Activated CD4-positive, alpha-beta memory T cell treated with anti-CD3 and anti-CD28 coated beads for 36 hours (primary cell): ENCODE measurements at regions of chr19 and their contacts with region 1.

Region 1: GRCh38 chr19:55452749-55453346 is 8.6 kb downstream of the ISOC2 start:
- DNase-seq: peak; percentile 52
- H3K4me3 Mint-ChIP-seq: no peak overlapping the region
- H3K27ac Mint-ChIP-seq: no peak overlapping the region
- H3K4me1 Mint-ChIP-seq: peaks cover 7% of the 10 kb centered on the region
- H3K27me3 Mint-ChIP-seq: peaks cover 22% of the 10 kb centered on the region

Region 2: DNA sequence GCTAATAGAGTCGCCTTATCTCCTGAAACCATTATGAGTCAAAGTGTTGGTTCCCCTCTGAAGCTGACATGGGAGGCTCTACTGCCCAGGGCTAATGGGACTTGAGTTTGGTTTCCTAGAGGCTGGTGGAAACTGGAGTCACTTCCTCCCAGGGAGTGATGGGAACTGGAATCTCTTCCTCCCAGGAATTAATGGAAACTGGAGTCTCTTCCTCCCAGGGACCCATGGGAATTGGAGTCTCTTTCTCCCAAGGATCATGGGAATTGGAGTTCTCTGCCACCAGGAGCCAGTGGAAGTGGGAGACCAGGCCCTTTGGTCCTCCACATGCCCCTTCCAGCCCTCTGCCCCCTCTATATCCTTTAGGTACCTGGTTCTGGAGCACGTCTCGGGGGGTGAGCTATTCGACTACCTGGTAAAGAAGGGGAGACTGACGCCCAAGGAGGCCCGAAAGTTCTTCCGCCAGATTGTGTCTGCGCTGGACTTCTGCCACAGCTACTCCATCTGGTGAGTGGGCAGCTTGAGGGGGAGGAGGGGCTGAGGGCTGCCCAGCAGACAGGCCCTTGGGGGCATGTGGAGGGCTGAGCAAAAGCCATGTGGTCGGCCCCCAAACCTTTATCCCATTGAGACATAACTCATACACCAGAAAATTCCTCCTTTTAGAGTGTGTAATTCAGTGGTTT is 163.6 kb before region 1 on chr19:
- CTCF ChIA-PET with region 1: no interaction called
- POLR2A ChIA-PET with region 1: no interaction called
- intact Hi-C with region 1: loop called (anchors 1 kb)
- DNase-seq: no peak
- H3K4me3 Mint-ChIP-seq: no peak overlapping the region
- H3K27ac Mint-ChIP-seq: no peak overlapping the region
- H3K4me1 Mint-ChIP-seq: no peaks in the 10 kb centered on the region
- H3K27me3 Mint-ChIP-seq: no peaks in the 10 kb centered on the region